Caco-2 (cell line): ENCODE measurements at regions of chr18 and their contacts with region 1.

Region 1: GRCh38 chr18:23131693-23132319 is 3.5 kb upstream of the CABLES1 start:
- DNase-seq: peak; percentile 66 to 75
- H3K4me3 ChIP-seq: no peak overlapping the region
- H3K4me3 Mint-ChIP-seq: no peak overlapping the region
- H3K27ac Mint-ChIP-seq: no peak overlapping the region
- H3K4me1 ChIP-seq: peaks cover 35% of the 10 kb centered on the region
- H3K4me1 Mint-ChIP-seq: peaks cover 14% of the 10 kb centered on the region
- H3K27me3 ChIP-seq: no peaks in the 10 kb centered on the region
- H3K27me3 Mint-ChIP-seq: no peaks in the 10 kb centered on the region
- CTCF ChIP-seq: peak; percentile 55 to 78

Region 2: DNA sequence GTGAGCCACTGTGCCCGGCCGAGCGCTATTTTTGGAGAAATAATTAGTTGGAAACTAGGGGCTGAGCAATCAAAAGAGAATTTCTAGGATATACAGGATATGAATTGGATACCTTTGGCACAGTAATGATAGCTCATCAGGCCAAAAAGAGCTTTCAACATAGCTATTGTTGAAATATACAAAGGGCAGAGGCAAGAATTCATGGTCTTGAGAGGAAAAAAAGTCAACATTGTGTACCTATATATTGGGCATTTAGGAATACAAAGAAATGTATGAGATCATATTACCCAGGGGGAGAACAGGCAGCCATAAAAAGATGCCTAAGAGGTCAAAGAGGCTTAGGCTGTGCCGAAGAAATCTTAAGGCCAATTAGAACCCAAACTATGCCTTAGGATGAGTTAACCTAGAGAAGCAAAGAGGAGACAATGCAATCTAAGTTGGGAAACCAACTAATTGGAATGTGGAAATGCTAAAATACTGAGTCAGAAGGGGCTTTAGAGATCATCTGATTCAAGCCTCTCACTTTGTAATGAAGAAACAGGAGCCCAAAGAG is 99.7 kb before region 1 on chr18:
- CTCF ChIA-PET with region 1: no interaction called
- POLR2A ChIA-PET with region 1: no interaction called
- intact Hi-C with region 1: loop called (anchors 5 kb)
- DNase-seq: no peak
- H3K4me3 ChIP-seq: no peak overlapping the region
- H3K4me3 Mint-ChIP-seq: no peak overlapping the region
- H3K27ac Mint-ChIP-seq: no peak overlapping the region
- H3K4me1 ChIP-seq: peaks cover 3% of the 10 kb centered on the region; the same call in 1 of the 2 replicates
- H3K4me1 Mint-ChIP-seq: no peaks in the 10 kb centered on the region
- H3K27me3 ChIP-seq: no peaks in the 10 kb centered on the region
- H3K27me3 Mint-ChIP-seq: no peaks in the 10 kb centered on the region
- CTCF ChIP-seq: no peak

Region 3: DNA sequence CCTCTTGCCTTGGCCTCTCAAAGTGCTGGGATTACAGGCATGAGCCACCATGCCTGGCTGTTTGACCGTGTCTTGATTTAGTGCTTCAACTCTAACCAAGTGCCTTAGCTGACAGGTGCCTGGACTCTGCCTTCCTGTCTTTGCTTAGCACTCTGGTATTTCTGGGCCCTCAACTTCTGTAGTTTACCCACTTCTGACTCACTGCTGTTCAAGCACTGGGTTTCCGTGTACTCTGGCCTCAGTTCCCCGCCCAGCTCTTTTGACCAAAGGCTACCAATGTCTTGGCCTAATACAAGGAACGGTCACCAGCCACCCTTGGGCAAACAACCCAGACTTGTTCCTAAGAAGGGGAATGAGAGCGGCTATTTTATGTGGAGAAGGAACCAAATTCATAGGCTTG is 32.2 kb before region 1 on chr18:
- CTCF ChIA-PET with region 1: interaction called, 5 read pairs
- POLR2A ChIA-PET with region 1: interaction called, 6 read pairs
- intact Hi-C with region 1: loop called (anchors 2 kb)
- DNase-seq: peak; percentile 89 to 94
- H3K4me3 ChIP-seq: no peak overlapping the region
- H3K4me3 Mint-ChIP-seq: peak overlapping the region; percentile 63
- H3K27ac Mint-ChIP-seq: peak overlapping the region; percentile 95
- H3K4me1 ChIP-seq: peaks cover 62% of the 10 kb centered on the region
- H3K4me1 Mint-ChIP-seq: peaks cover 31% of the 10 kb centered on the region
- H3K27me3 ChIP-seq: no peaks in the 10 kb centered on the region
- H3K27me3 Mint-ChIP-seq: no peaks in the 10 kb centered on the region
- CTCF ChIP-seq: no peak

Region 4: GRCh38 chr18:23317975-23318675 is 186.3 kb after region 1 on chr18:
- CTCF ChIA-PET with region 1: no interaction called
- POLR2A ChIA-PET with region 1: no interaction called
- intact Hi-C with region 1: no loop called
- DNase-seq: no peak
- H3K4me3 ChIP-seq: no peak overlapping the region
- H3K4me3 Mint-ChIP-seq: no peak overlapping the region
- H3K27ac Mint-ChIP-seq: no peak overlapping the region
- H3K4me1 ChIP-seq: no peaks in the 10 kb centered on the region
- H3K4me1 Mint-ChIP-seq: no peaks in the 10 kb centered on the region
- H3K27me3 ChIP-seq: no peaks in the 10 kb centered on the region
- H3K27me3 Mint-ChIP-seq: no peaks in the 10 kb centered on the region
- CTCF ChIP-seq: no peak

Region 5: GRCh38 chr18:23377669-23378301 is 246.0 kb after region 1 on chr18:
- CTCF ChIA-PET with region 1: no interaction called
- POLR2A ChIA-PET with region 1: interaction called, 20 read pairs
- intact Hi-C with region 1: loop called (anchors 1 kb)
- DNase-seq: no peak
- H3K4me3 ChIP-seq: no peak overlapping the region
- H3K4me3 Mint-ChIP-seq: no peak overlapping the region
- H3K27ac Mint-ChIP-seq: no peak overlapping the region
- H3K4me1 ChIP-seq: no peaks in the 10 kb centered on the region
- H3K4me1 Mint-ChIP-seq: peaks cover 7% of the 10 kb centered on the region
- H3K27me3 ChIP-seq: no peaks in the 10 kb centered on the region
- H3K27me3 Mint-ChIP-seq: no peaks in the 10 kb centered on the region
- CTCF ChIP-seq: no peak